HEK293 (cell line): ENCODE measurements at regions of chr12 and their contacts with region 1.

Region 1: GRCh38 chr12:120292661-120293531 is at the start of gene RNU4-1:
- H3K4me3 ChIP-seq: peak within 1 kb of the TSS; percentile 63
- H3K27ac ChIP-seq: peak within 1 kb of the TSS; percentile 100
- H3K4me1 ChIP-seq: no peaks in the 10 kb centered on the region
- CTCF ChIP-seq: no peak

Region 2: GRCh38 chr12:119302451-119303080 is 990.3 kb before region 1 on chr12:
- CTCF ChIA-PET with region 1: no interaction called
- POLR2A ChIA-PET with region 1: no interaction called
- H3K4me3 ChIP-seq: no peak overlapping the region
- H3K27ac ChIP-seq: no peak overlapping the region
- H3K4me1 ChIP-seq: no peaks in the 10 kb centered on the region
- CTCF ChIP-seq: no peak

Region 3: GRCh38 chr12:120086801-120087621 is 205.9 kb before region 1 on chr12:
- CTCF ChIA-PET with region 1: no interaction called
- POLR2A ChIA-PET with region 1: interaction called, 14 read pairs
- H3K4me3 ChIP-seq: peak overlapping the region; percentile 40
- H3K27ac ChIP-seq: no peak overlapping the region; the same call in 1 of the 2 replicates
- H3K4me1 ChIP-seq: peaks cover 2% of the 10 kb centered on the region; the same call in 1 of the 2 replicates
- CTCF ChIP-seq: peak; percentile 99

Region 4: GRCh38 chr12:120234643-120235368 is 58.1 kb before region 1 on chr12:
- CTCF ChIA-PET with region 1: interaction called, 67 read pairs
- POLR2A ChIA-PET with region 1: interaction called, 194 read pairs
- H3K4me3 ChIP-seq: no peak overlapping the region
- H3K27ac ChIP-seq: peak overlapping the region; percentile 11; the same call in 1 of the 2 replicates
- H3K4me1 ChIP-seq: peaks cover 36% of the 10 kb centered on the region
- CTCF ChIP-seq: peak; percentile 48

Region 5: DNA sequence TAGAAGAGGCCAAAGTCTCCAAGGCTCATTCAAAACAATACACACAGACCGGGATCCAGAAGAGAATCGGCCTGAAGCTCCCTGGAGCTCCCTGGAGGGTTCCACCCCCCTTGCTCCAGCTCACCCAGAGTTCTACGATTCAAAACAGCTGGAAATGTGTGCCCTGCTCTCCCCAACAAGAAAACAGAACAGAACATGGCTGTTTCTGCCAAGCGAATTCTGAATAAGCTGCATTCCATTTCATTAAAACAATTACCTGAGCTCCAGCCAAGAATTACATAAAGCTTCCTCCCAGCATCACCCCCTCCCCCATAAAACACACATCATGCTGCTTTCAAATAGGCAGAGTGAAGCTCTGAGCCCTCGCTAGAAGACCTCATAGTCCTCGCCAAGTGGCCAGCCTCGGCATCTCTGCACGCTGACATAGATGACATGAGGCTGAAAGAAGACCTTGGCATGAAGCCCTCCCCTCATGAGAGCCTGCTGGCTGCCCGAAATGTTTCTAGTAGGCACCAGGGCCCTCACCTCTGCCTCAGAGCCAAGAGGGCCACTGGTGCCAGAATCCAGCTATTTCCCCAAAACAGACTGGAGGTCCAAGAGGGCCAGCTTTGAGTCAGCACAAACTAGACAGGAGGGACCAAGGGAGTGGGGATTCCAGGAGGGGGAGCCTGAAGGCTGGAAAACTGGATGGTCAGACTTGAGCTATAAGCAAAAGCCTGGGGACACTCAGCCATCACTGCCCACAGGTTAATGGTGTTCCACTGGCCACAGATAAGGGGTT is 35.7 kb before region 1 on chr12:
- CTCF ChIA-PET with region 1: no interaction called
- POLR2A ChIA-PET with region 1: interaction called, 21 read pairs
- H3K4me3 ChIP-seq: no peak overlapping the region
- H3K27ac ChIP-seq: no peak overlapping the region
- H3K4me1 ChIP-seq: peaks cover 5% of the 10 kb centered on the region; the same call in 1 of the 2 replicates
- CTCF ChIP-seq: 0 out of 2 replicates have a peak, but pooled peaks have one; percentile 11

Region 6: GRCh38 chr12:120276734-120277133 is 16.2 kb before region 1 on chr12:
- CTCF ChIA-PET with region 1: interaction called, 4 read pairs
- POLR2A ChIA-PET with region 1: interaction called, 16 read pairs
- H3K4me3 ChIP-seq: no peak overlapping the region
- H3K27ac ChIP-seq: no peak overlapping the region
- H3K4me1 ChIP-seq: no peaks in the 10 kb centered on the region
- CTCF ChIP-seq: no peak

Region 7: GRCh38 chr12:120469450-120470149 is 176.7 kb after region 1 on chr12 and contains the start of gene SRSF9:
- CTCF ChIA-PET with region 1: interaction called, 4 read pairs
- POLR2A ChIA-PET with region 1: interaction called, 16 read pairs
- H3K4me3 ChIP-seq: peak within 1 kb of the TSS; percentile 96
- H3K27ac ChIP-seq: peak within 1 kb of the TSS; percentile 99
- H3K4me1 ChIP-seq: peaks cover 14% of the 10 kb centered on the region; the same call in 1 of the 2 replicates
- CTCF ChIP-seq: peak; percentile 99

Region 8: GRCh38 chr12:120495723-120496412 is 203.0 kb after region 1 on chr12 and contains the start of gene DYNLL1:
- CTCF ChIA-PET with region 1: no interaction called
- POLR2A ChIA-PET with region 1: no interaction called
- H3K4me3 ChIP-seq: peak within 1 kb of the TSS; percentile 83
- H3K27ac ChIP-seq: peak within 1 kb of the TSS; percentile 66; the same call in 1 of the 2 replicates
- H3K4me1 ChIP-seq: peaks cover 3% of the 10 kb centered on the region; the same call in 1 of the 2 replicates
- CTCF ChIP-seq: no peak